A549 (cell line): ENCODE measurements at regions of chr1 and their contacts with region 1.

Region 1: DNA sequence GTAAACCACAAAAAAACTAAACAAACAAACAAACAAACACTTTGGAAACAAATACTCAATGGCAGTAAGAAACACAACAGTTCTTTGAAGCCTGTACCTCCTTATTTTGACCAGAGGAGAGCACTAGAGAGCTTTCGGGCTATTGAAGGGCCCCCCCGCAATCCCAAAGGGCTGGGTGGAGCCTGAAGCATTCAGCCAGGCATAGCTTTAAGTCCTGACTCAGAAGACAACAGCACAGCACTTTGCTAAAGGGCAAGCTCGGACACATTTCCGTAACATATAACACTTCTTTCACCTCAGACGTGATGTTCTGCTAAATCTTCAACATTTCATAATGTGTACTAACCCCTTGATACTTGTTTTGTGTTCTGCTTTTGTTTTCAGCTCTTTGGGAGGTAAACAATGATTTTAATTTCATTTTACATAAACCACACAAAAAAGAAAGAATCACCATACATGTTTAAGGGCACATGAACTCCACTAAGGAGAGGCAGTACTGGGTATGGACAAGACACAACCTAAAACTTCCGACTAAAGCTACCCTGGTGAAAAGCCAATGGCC is 9.7 kb upstream of the SHCBP1L start:
- DNase-seq: peak; percentile 87 to 93
- ATAC-seq: peak; percentile 99 to 100
- H3K4me3 ChIP-seq: peak overlapping the region; percentile 34; the same call in 2 of the 3 replicates
- H3K27ac ChIP-seq: peak overlapping the region; percentile 86 to 88
- H3K4me1 ChIP-seq: peaks cover 5% of the 10 kb centered on the region
- CTCF ChIP-seq: peak; percentile 96
- EP300 ChIP-seq: no peak
- POLR2A ChIP-seq: peak; percentile 50
- RAD21 ChIP-seq: peak; percentile 98 to 99

Region 2: DNA sequence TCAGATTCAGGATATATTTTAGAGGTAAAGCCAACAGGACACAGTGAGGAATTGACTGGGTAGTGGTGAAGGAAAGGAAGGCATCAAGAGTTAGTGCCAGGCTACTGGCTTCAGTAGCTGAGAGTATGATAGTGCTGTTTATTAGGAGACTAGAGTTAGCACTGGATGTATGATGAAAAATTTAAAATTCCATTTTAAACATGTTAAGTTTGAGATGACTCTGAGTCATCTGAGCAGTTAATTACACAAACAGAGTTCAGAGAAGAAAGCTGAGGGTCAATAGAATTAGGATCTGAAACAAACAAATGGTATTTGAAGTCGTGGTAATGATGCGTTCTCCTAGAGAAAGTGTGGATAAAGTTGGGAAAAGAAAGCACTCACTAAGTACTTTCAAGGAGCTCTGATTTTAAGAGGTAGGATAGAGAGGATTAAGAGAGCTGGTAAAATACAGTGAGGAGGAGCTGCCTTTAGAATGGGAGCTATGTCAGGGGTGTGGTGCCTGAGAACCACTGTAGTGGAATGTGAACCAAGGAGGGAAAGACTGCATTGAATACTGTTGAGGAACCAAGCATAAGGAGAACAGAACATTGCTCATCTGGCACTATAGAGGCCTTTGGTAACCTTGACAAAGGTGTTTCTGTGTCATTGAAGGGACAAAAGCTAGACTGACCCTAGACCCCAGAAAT is 12.0 kb after region 1 on chr1:
- CTCF ChIA-PET with region 1: interaction called, 17 read pairs
- POLR2A ChIA-PET with region 1: no interaction called
- DNase-seq: peak in 1 of 2 experiments; percentile 13
- ATAC-seq: peak in 1 of 2 experiments; percentile 59; a peak in 2 of 6 replicates
- H3K4me3 ChIP-seq: no peak overlapping the region
- H3K27ac ChIP-seq: no peak overlapping the region
- H3K4me1 ChIP-seq: no peaks in the 10 kb centered on the region; the same call in 2 of the 3 replicates
- CTCF ChIP-seq: no peak
- EP300 ChIP-seq: no peak
- POLR2A ChIP-seq: no peak
- RAD21 ChIP-seq: no peak

Region 3: GRCh38 chr1:183023601-183024316 is 61.1 kb after region 1 on chr1:
- CTCF ChIA-PET with region 1: interaction called, 42 read pairs
- POLR2A ChIA-PET with region 1: interaction called, 10 read pairs
- DNase-seq: peak; percentile 86
- ATAC-seq: peak; percentile 79 to 85
- H3K4me3 ChIP-seq: peak overlapping the region; percentile 76
- H3K27ac ChIP-seq: peak overlapping the region; percentile 99 to 100
- H3K4me1 ChIP-seq: peaks cover 62% of the 10 kb centered on the region
- CTCF ChIP-seq: peak; percentile 38
- EP300 ChIP-seq: no peak
- POLR2A ChIP-seq: peak; percentile 18; the same call in 1 of the 2 replicates
- RAD21 ChIP-seq: peak; percentile 51 to 55; a peak in 4 of 5 replicates

Region 4: GRCh38 chr1:183227963-183228649 is 265.5 kb after region 1 on chr1:
- CTCF ChIA-PET with region 1: interaction called, 40 read pairs
- POLR2A ChIA-PET with region 1: interaction called, 4 read pairs
- DNase-seq: peak; percentile 47 to 71
- ATAC-seq: peak; percentile 79 to 94
- H3K4me3 ChIP-seq: no peak overlapping the region
- H3K27ac ChIP-seq: no peak overlapping the region
- H3K4me1 ChIP-seq: peaks cover 18% of the 10 kb centered on the region
- CTCF ChIP-seq: peak; percentile 56
- EP300 ChIP-seq: no peak
- POLR2A ChIP-seq: no peak
- RAD21 ChIP-seq: peak; percentile 67 to 79

Region 5: DNA sequence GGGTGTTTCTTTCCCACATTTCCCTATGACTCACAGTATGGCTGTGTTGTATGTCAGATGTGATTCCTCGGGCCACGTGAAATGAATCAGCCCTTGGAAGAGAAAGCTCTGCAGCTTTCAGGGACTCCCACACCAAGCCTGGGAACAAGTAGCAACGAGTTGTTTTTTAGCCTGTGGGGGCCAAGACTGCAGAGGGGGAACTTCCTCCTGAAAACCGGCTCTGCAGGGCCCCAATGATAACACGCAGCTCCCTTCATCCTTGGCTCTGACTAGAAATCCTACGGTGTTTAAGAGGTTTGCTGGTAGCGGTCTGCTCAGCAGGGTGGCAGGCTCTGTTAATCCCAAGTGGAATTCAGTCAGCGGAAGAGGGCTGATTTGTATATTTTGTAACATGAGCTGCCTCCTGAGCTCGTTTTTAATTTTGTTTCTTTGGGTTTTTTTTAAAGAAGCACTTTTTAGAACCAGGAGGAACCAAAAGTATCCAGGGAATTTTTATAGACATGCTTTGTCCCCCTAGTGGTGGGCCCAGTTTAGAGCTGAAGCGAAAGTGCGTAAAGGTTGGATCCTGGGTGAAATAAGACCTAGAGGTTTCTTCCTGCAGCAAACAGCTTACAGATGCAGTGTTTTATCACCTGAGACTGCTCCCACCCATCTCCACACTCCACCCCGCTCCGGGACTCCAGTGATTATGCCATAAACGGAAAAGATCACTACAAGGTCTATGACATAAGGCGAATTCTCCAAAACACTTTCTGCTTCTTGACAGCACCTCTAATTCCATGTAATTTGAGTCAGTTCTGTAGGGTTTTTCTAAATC is 272.2 kb after region 1 on chr1:
- CTCF ChIA-PET with region 1: interaction called, 18 read pairs
- POLR2A ChIA-PET with region 1: interaction called, 8 read pairs
- DNase-seq: peak; percentile 59 to 70
- ATAC-seq: peak; percentile 75 to 88
- H3K4me3 ChIP-seq: peak overlapping the region; percentile 28; the same call in 2 of the 3 replicates
- H3K27ac ChIP-seq: peak overlapping the region; percentile 67 to 77
- H3K4me1 ChIP-seq: peaks cover 24% of the 10 kb centered on the region
- CTCF ChIP-seq: peak; percentile 72
- EP300 ChIP-seq: no peak
- POLR2A ChIP-seq: no peak
- RAD21 ChIP-seq: peak; percentile 50 to 60

Region 6: DNA sequence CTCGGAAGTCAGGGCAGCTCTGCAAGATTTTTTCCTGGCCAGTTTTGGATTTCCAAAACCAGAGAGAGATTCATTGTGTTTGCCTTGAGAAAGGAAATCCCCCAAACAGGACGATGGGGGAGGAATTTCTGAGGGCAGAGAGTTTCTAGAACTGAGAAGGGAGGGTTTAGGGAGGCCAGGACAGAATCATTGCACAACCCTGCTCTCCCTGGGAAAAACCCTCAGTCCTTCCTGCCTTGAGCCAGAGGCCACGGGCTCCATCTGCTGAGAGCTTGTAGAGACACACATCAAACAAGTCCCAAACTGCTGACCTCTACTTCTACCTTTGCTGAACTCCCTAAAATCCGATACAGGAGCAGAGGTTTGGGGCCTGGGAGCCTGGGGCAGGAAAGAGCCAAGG is 355.8 kb after region 1 on chr1:
- CTCF ChIA-PET with region 1: interaction called, 33 read pairs
- POLR2A ChIA-PET with region 1: interaction called, 3 read pairs
- DNase-seq: peak; percentile 48 to 77
- ATAC-seq: peak; percentile 97 to 99
- H3K4me3 ChIP-seq: no peak overlapping the region
- H3K27ac ChIP-seq: peak overlapping the region in 1 of 2 experiments; percentile 44; a peak in 2 of 6 replicates
- H3K4me1 ChIP-seq: peaks cover 9% of the 10 kb centered on the region; the same call in 2 of the 3 replicates
- CTCF ChIP-seq: peak; percentile 49
- EP300 ChIP-seq: no peak
- POLR2A ChIP-seq: no peak
- RAD21 ChIP-seq: peak; percentile 72 to 78